Vagina (tissue), 2 donors: ENCODE measurements at regions of chr11 and their contacts with region 1.

Region 1: GRCh38 chr11:109454857-109455256 is 32.9 kb downstream of the C11orf87 start:
- DNase-seq: no peak
- H3K4me3 ChIP-seq: no peak overlapping the region
- H3K27ac ChIP-seq: no peak overlapping the region
- H3K4me1 ChIP-seq: no peaks in the 10 kb centered on the region
- H3K27me3 ChIP-seq: no peaks in the 10 kb centered on the region
- CTCF ChIP-seq: no peak
- POLR2A ChIP-seq: no peak

Region 2: DNA sequence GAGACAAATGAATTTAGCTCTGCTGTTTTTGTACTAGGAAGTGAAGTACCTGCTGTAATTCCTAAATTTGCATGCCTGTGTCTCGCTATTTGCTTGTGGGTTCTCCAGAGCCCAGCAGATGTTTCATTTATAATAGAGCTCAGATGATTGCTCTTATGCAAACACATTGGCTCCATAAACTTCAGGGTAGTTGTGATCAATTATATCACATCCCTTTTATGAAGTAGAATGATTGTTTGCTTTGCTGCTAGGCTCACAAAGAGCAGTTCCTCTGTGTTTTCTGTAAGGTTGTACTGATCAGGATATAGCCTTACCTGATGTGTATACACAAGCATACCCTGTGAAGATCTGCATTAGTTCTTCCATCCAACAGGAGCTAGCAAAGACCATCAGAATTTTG is 31.3 kb after region 1 on chr11:
- intact Hi-C with region 1: loop called (anchors 1 kb)
- DNase-seq: no peak
- H3K4me3 ChIP-seq: no peak overlapping the region
- H3K27ac ChIP-seq: no peak overlapping the region
- H3K4me1 ChIP-seq: no peaks in the 10 kb centered on the region
- H3K27me3 ChIP-seq: no peaks in the 10 kb centered on the region
- CTCF ChIP-seq: no peak
- POLR2A ChIP-seq: no peak

Region 3: GRCh38 chr11:109747839-109748238 is 293.0 kb after region 1 on chr11:
- intact Hi-C with region 1: no loop called
- DNase-seq: no peak
- H3K4me3 ChIP-seq: no peak overlapping the region
- H3K27ac ChIP-seq: no peak overlapping the region
- H3K4me1 ChIP-seq: no peaks in the 10 kb centered on the region
- H3K27me3 ChIP-seq: no peaks in the 10 kb centered on the region
- CTCF ChIP-seq: no peak
- POLR2A ChIP-seq: no peak